ENCODE measurements at regions of chr12 and their contacts with region 1.

Region 1: DNA sequence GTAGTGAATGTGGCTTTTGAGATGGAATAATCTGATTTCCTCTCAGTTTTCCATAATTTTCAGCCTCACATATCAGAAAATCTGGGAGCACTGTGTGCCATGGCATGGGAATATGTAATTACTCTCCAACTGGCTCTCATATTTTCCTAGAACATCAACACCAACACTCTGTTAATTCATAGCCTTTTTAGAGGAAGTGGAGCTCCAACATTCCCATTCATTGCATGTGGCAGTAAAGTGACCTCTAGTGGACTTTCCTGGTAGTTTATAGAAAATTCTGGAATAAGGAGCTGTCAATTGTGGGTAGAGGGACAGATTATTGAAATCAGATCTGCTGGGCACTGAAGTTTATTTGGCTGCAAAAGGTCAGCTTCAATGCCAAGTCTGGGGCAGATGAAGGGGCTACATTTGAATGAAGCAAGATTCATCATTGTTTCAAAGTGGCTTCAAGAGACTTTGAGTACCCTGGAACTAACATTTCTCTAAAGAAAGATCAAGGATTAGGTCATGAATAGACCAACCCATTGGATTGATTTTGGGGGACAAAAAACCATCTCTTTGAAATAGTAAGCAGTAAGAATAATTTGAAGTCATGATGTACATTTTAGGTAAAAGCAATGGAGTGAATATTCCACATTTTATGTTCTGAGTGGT is 23.6 kb upstream of the USP44 start:
- DNase-seq: no peak
- H3K4me3 ChIP-seq: no peak overlapping the region
- H3K27ac ChIP-seq: no peak overlapping the region
- H3K27me3 ChIP-seq: no peaks in the 10 kb centered on the region
- CTCF ChIP-seq: peak; percentile 83

Region 2: GRCh38 chr12:95371571-95371970 is 203.4 kb before region 1 on chr12:
- CTCF ChIA-PET with region 1: no interaction called
- POLR2A ChIA-PET with region 1: no interaction called
- DNase-seq: no peak
- H3K4me3 ChIP-seq: no peak overlapping the region
- H3K27ac ChIP-seq: no peak overlapping the region
- H3K27me3 ChIP-seq: no peaks in the 10 kb centered on the region
- CTCF ChIP-seq: no peak

Region 3: GRCh38 chr12:95428472-95428871 is 146.5 kb before region 1 on chr12:
- CTCF ChIA-PET with region 1: no interaction called
- POLR2A ChIA-PET with region 1: no interaction called
- DNase-seq: no peak
- H3K4me3 ChIP-seq: no peak overlapping the region
- H3K27ac ChIP-seq: no peak overlapping the region
- H3K27me3 ChIP-seq: no peaks in the 10 kb centered on the region
- CTCF ChIP-seq: no peak

Region 4: DNA sequence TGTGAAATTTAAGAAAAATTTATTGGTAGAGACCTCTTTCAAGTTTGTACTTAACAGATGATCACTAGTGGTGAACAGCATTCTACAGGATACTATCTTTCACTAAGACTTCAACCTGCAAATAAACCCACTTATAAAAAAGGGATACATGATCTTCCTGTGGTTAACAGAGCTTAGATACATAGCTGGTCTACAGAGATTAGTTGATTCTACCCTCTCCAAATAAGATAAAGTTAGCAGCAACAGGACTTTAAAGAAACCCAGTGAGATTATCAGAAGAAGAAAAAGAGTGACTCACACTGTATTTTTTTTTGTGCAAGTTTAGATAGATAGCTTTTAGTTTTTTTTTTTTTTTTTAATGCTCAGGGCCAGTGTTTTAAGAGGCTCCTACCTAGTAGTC is 58.2 kb before region 1 on chr12:
- CTCF ChIA-PET with region 1: interaction called, 14 read pairs
- POLR2A ChIA-PET with region 1: interaction called, 4 read pairs
- DNase-seq: no peak
- H3K4me3 ChIP-seq: no peak overlapping the region
- H3K27ac ChIP-seq: no peak overlapping the region
- H3K27me3 ChIP-seq: no peaks in the 10 kb centered on the region
- CTCF ChIP-seq: no peak

Region 5: GRCh38 chr12:95538656-95539055 is 36.3 kb before region 1 on chr12:
- CTCF ChIA-PET with region 1: interaction called, 11 read pairs
- POLR2A ChIA-PET with region 1: interaction called, 3 read pairs
- DNase-seq: no peak
- H3K4me3 ChIP-seq: no peak overlapping the region
- H3K27ac ChIP-seq: no peak overlapping the region
- H3K27me3 ChIP-seq: no peaks in the 10 kb centered on the region
- CTCF ChIP-seq: no peak

Region 6: GRCh38 chr12:95553197-95553943 is 21.6 kb before region 1 on chr12:
- CTCF ChIA-PET with region 1: interaction called, 24 read pairs
- POLR2A ChIA-PET with region 1: no interaction called
- DNase-seq: no peak
- H3K4me3 ChIP-seq: no peak overlapping the region
- H3K27ac ChIP-seq: no peak overlapping the region
- H3K27me3 ChIP-seq: no peaks in the 10 kb centered on the region
- CTCF ChIP-seq: no peak

Region 7: DNA sequence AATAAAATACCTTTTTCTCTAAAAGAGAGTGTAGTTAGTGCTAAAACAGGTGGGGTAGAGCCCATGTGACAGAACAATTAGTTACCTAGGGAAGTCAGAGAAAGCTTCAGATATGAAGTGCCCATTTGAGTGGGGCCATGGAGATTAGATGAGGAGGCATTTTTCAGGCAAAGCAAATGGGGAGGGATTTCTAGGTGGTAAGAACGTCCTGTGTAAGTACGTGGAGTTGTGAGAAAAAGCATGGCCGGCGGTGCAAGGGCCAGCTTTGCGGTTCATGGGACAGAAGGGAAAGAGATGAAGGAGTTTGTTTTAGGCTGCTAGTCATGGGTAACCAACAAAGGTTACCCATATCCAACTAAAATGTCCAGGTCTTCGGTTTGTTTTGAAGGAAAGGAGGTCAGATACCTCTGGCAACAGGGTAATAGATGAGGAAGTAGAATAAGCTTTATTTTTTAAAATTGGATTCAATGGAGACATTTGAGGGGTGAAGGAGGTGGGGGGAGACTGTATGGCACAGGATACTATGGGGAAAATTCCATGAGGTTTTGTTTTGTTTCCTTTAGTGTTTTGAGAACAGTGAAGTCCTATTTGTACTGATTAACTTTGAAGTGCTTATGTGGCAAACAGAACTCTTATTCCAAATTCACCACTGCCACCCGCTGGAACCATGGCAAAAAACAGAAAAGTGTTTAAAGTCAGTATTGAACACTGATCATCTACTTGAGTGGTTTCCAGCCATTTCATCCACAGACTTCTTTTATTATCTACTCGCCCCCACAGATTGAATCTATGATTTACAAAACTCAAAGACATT is 273.9 kb after region 1 on chr12:
- CTCF ChIA-PET with region 1: interaction called, 12 read pairs
- POLR2A ChIA-PET with region 1: no interaction called
- DNase-seq: no peak
- H3K4me3 ChIP-seq: no peak overlapping the region
- H3K27ac ChIP-seq: no peak overlapping the region
- H3K27me3 ChIP-seq: peaks cover 9% of the 10 kb centered on the region
- CTCF ChIP-seq: peak; percentile 44